Activated CD4-positive, alpha-beta memory T cell treated with anti-CD3 and anti-CD28 coated beads for 36 hours (primary cell): ENCODE measurements at regions of chr4 and their contacts with region 1.

Region 1: DNA sequence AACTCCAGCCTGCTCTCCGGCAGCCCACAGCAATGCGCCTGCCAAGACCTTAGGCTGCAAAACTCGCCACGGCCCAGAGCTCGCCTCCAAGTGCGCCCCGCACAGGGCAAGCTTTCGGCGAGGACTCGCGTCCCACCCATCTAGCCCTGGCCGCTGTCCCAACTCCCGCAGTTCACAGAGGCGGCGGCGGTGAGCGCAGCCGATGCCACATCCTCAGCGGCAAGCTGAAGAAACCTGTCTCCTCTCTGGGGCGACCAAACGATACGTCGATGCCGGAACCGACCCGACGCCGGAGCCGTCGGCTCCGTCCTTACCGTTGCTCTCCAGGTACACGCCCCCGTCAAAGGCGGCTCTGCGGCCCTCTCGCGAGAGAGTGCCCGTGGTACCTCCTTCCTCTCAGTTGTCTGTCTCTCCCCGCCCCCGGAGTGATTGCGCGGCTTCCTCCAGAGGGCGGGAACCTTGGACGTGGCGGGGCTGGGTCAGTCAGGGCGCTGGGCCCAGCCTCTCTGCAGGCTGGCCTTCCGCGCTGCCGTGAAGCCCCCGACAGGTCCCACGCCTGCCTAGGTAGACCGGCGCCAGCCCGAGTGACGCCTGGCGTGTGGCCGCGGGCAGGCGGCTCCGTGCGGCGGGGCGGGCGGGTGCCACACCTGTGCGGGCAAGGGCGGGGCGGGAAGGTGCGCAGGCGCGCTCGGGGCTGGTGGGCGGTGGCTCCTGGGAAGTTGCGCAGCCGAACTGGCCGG is 380 bp upstream of the RAB33B start:
- DNase-seq: peak; percentile 98
- H3K4me3 Mint-ChIP-seq: peak overlapping the region; percentile 95
- H3K27ac Mint-ChIP-seq: peak overlapping the region; percentile 97
- H3K4me1 Mint-ChIP-seq: peaks cover 50% of the 10 kb centered on the region
- H3K27me3 Mint-ChIP-seq: no peaks in the 10 kb centered on the region

Region 2: GRCh38 chr4:139015269-139015947 is 438.1 kb before region 1 on chr4 and contains the start of gene NOCT:
- CTCF ChIA-PET with region 1: no interaction called
- POLR2A ChIA-PET with region 1: interaction called, 3 read pairs
- intact Hi-C with region 1: loop called (anchors 1 kb)
- DNase-seq: peak; percentile 97
- H3K4me3 Mint-ChIP-seq: peak within 1 kb of the TSS; percentile 89
- H3K27ac Mint-ChIP-seq: peak within 1 kb of the TSS; percentile 94
- H3K4me1 Mint-ChIP-seq: peaks cover 45% of the 10 kb centered on the region
- H3K27me3 Mint-ChIP-seq: no peaks in the 10 kb centered on the region
- total RNA-seq, gene NOCT: 12.2 to 14.3 TPM

Region 3: DNA sequence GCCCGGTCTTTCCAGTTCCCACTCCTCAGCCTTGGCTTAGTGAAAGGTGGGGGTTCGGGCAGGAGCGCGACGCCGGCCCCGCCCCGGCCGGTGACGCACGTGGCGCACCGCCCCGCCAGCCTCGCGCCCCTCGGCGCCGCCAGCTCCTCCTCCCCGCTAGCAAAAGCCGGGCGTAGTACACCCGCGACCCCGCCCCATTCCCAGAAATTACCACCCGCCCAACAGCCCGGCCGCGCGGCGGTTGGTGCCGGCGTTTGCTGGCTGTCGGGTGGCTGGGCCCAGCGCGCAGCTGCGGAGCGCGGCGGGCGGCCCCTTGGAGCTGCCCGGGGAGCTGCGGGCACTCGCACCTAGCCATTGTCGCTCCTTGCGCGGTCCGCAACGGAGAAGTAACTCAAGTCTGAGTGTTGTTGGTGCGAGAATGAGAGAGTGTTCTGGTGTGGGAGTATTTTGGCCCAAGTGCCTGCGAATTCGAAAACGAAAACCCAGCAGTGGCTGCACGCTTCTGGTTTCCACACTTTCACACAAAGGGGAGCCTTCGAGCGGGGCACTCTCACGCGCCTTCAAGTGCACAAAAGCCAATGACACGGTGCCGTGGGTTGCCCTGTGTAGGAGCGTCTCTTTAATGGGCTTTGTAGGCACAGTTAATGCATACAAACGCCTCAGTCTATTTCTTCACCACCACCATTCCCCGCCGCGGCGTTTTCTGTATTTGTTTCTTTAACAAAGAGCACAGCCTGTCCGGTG is 275.5 kb before region 1 on chr4:
- CTCF ChIA-PET with region 1: no interaction called
- POLR2A ChIA-PET with region 1: interaction called, 7 read pairs
- intact Hi-C with region 1: loop called (anchors 1 kb)
- DNase-seq: peak; percentile 95
- H3K4me3 Mint-ChIP-seq: peak overlapping the region; percentile 80
- H3K27ac Mint-ChIP-seq: peak overlapping the region; percentile 78
- H3K4me1 Mint-ChIP-seq: peaks cover 22% of the 10 kb centered on the region
- H3K27me3 Mint-ChIP-seq: peaks cover 4% of the 10 kb centered on the region

Region 4: GRCh38 chr4:139301113-139301820 is 152.3 kb before region 1 on chr4 and contains the start of gene NAA15:
- CTCF ChIA-PET with region 1: interaction called, 4 read pairs
- POLR2A ChIA-PET with region 1: interaction called, 9 read pairs
- intact Hi-C with region 1: loop called (anchors 1 kb)
- DNase-seq: peak; percentile 99
- H3K4me3 Mint-ChIP-seq: peak within 1 kb of the TSS; percentile 100
- H3K27ac Mint-ChIP-seq: peak within 1 kb of the TSS; percentile 100
- H3K4me1 Mint-ChIP-seq: peaks cover 51% of the 10 kb centered on the region
- H3K27me3 Mint-ChIP-seq: no peaks in the 10 kb centered on the region
- total RNA-seq, gene NAA15: 91.2 to 95.8 TPM

Region 5: DNA sequence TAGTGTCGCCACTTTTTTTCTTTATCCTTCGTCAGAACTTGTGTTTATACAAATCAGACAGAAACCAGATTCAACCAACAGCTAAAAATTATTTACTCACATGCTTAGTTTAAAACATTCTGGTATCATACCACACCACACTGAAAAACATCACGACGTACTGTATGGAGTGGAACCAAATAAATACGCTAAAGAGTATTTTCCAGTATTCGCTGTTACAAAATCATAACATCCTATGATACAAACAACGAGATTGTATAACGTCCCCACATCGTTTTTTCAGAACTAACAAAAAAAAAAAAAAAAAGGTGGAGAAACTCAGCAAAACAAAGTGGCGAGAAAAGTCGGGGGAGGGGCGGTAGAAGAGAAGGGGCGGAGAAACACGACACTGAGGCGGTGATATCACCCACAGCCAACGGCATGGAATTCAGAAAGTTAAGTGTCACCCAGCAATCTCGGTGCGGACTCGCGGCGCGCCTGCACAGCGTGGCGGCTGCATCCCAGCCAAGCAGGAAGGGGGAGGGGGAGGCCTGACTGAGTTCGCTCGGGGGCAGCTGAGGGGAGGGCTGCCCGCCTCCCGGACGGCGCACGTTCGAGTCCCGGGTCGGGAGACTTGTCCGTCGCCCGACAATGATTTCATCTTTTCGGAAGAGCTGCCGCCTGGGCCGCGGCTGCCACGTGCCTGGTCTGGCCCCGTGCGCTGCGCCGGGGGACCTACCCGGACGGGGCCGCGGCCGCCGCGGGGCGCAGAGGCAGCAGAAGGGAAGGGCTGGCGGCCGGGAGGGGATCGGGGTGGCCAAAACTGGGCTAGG is 101.6 kb after region 1 on chr4:
- CTCF ChIA-PET with region 1: interaction called, 5 read pairs
- POLR2A ChIA-PET with region 1: interaction called, 23 read pairs
- intact Hi-C with region 1: loop called (anchors 1 kb)
- DNase-seq: peak; percentile 91
- H3K4me3 Mint-ChIP-seq: peak overlapping the region; percentile 95
- H3K27ac Mint-ChIP-seq: peak overlapping the region; percentile 96
- H3K4me1 Mint-ChIP-seq: peaks cover 62% of the 10 kb centered on the region
- H3K27me3 Mint-ChIP-seq: no peaks in the 10 kb centered on the region

Region 6: DNA sequence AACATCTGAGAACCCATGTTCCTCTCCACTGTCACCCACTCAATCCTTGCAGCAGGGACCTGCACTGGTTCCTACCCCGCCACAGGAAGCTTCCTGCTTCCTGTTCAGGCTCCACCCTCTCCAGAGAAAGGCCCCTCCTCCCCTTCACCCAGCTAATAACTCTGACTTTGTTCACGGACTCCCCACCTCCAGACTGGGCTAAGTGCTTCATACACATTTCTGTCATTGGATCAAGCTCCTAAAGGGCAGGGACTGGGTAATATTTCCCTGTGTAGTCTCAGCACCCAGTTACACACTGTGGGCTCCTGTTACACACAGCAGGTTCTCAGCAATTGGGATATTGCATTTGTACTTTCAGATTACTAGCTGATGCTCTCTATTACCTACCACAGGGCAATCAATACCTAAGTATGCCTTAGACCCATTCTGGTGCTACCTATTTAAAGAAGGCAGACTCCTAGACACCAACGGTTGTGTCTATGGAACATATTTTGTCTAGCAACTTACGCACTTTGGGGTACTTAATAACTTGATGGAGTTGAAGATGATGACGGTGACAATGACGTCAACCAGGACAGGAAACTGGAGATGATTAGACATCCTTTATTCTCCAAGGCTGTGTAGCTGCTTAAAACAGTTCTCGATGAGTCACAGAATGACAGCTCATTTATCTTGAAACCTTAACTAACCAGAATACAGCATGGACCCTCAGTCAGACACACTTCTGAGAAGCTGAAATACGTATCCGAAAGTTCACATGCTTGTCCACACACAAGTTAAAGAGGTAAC is 642.3 kb after region 1 on chr4:
- CTCF ChIA-PET with region 1: no interaction called
- POLR2A ChIA-PET with region 1: no interaction called
- intact Hi-C with region 1: loop called (anchors 5 kb)
- DNase-seq: peak; percentile 75
- H3K4me3 Mint-ChIP-seq: peak overlapping the region; percentile 75
- H3K27ac Mint-ChIP-seq: peak overlapping the region; percentile 98
- H3K4me1 Mint-ChIP-seq: peaks cover 71% of the 10 kb centered on the region
- H3K27me3 Mint-ChIP-seq: no peaks in the 10 kb centered on the region

Region 7: DNA sequence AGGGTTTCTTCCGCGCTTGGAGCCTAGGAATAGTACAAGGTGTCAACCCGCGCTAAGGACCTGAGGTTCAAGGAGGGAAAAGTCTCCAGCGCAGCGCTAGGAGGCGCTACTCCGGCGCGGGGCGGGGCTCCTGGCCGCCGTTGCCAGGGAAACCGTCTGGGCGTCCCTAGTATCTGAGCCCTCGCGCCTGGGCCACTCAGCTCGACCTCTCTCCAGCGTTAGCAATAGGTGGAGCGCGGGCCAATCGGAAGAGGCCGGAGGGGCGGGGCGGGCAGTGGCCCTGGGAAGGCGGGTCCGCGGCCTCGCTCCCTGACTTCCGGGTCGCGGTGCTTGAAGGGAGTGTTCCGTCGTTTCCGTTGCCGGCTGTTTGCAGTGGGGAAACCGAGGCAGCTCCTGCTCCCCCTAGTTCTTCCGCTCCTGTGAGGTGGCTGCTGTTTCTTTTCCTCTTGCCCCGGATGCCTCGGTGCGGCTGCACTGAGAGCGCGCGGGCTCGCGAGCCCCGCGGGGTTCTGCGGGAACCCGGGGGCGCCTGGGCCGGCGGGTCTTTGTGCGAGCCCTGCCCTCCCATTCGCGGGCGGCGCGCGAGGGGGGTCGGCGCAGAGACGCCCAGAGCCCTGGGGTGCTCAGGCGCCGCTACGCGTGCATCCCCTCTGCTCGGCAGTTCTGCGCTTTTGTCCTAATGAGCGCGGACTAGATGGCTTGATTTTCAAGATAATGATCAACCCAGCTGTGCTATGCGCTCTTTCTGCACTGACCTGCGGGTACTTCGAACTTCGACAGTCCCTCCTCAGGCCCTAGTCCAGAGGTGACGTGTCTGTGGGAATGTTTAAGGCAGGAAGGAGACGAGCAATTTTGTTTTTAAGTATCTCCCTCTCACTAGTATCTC is 1070.6 kb after region 1 on chr4 and contains the start of gene ELMOD2:
- CTCF ChIA-PET with region 1: no interaction called
- POLR2A ChIA-PET with region 1: no interaction called
- intact Hi-C with region 1: loop called (anchors 5 kb)
- DNase-seq: peak; percentile 98
- H3K4me3 Mint-ChIP-seq: peak within 1 kb of the TSS; percentile 84
- H3K27ac Mint-ChIP-seq: peak within 1 kb of the TSS; percentile 54
- H3K4me1 Mint-ChIP-seq: peaks cover 23% of the 10 kb centered on the region
- H3K27me3 Mint-ChIP-seq: no peaks in the 10 kb centered on the region
- total RNA-seq, gene ELMOD2: 15.5 to 17.3 TPM